CD14-positive monocyte (primary cell): ENCODE measurements at regions of chr12 and their contacts with region 1.

Region 1: DNA sequence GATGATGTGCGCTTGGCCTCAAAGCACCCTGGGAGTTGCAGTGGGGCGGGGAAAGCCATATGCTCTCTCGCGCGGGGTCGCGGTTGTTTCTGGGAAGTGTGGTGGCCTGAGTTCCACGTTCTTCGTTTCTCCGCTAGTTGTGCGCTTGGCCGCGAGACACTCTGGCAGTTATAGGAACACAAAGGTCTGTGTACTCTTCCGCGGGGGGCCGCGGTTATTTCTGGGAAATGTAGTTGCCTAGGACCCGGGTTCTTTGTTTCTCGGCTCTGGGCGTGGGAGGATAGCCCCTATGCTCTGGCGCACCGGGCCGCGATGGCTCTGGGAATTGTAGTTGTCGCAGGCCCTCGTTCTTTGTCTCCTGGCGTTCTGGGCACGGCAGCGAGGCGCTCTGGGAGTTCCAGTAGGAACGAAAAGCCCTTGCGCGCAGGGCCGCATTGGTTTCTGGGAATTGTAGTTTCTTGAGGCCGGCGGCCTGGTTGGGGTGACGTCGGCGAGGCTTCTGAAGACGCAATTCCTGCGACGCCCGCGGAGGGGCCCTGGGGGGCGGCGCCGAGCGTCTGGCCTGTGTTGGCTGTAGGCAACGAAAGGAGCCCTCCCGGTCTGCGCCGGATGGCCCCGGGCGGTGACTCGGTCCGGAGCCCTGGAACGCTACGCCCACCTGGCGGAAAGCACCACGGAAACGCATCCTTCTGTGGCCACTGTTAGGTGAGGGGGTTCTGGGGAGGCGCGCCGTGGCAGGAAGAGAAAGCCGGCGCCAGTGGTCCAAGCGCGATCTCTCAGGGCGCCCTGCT is at the start of gene ZNF140:
- DNase-seq: peak; percentile 94 to 96 (median 95)
- H3K4me3 ChIP-seq: peak within 1 kb of the TSS; percentile 78 to 86 (median 81)
- H3K4me3 Mint-ChIP-seq: peak within 1 kb of the TSS in 1 of 2 donors; percentile 26
- H3K27ac ChIP-seq: peak within 1 kb of the TSS; percentile 96 to 98
- H3K27ac Mint-ChIP-seq: peak within 1 kb of the TSS in 4 of 7 donors; percentile 40 to 82 (median 51)
- H3K4me1 ChIP-seq: peaks cover 11 to 12% of the 10 kb centered on the region in 2 donors
- H3K4me1 Mint-ChIP-seq: peaks cover 5% of the 10 kb centered on the region
- H3K27me3 ChIP-seq: no peaks in the 10 kb centered on the region
- H3K27me3 Mint-ChIP-seq: peaks cover 0 to 4% (median 0%) of the 10 kb centered on the region in 3 donors
- CTCF ChIP-seq: peak; percentile 30
- polyA plus RNA-seq, gene ZNF140: 6.2 to 11.8 (median 6.3) TPM

Region 2: DNA sequence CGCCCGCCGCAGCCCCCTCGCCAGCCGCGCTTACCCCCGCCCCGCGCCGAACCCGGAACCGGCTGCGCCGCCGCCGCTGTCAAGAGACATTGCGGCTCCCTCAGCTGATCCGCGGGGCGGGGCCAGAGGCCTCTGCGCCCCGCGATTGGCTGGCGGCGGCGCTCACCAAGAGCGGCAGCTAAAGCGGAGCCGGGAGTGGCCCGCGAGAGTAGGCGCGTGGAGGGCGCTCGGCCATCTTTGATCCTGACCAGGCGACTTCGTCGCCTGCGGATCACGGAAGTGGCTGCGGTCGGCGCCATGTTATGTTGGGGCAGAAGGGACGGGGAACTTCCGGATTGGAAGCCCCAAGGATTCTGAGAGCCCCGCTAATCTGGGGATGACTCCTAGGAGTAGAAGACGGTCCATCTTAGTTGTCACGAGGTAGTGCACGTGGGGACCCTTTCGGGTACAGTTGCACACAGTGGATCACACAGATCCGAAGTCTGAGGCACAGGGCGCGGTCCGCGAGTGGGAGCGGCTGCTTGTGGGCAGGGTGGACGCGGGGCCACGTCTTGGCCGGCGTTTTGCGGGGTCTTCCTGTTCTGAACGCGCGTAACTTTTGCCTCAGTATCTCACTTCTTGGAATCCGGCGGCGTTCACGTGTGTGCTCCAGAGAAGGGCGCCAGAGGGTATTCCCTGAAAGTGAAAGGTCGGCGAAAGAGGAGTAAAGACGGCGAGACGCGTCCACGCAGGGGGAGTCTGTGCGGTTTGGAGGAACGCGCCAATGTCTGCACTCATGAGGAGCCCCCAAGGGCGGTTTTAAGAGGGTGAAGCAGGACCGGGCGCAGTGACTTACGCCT is 192.8 kb before region 1 on chr12 and contains the start of gene CHFR:
- intact Hi-C with region 1: loop called (anchors 2 to 5 kb)
- DNase-seq: peak; percentile 98 to 99 (median 99)
- H3K4me3 ChIP-seq: peak within 1 kb of the TSS; percentile 85 to 92 (median 86)
- H3K4me3 Mint-ChIP-seq: peak within 1 kb of the TSS; percentile 97 to 98
- H3K27ac ChIP-seq: peak within 1 kb of the TSS; percentile 89 to 99
- H3K27ac Mint-ChIP-seq: peak within 1 kb of the TSS; percentile 98 to 100 (median 99)
- H3K4me1 ChIP-seq: peaks cover 10 to 15% of the 10 kb centered on the region in 2 donors
- H3K4me1 Mint-ChIP-seq: peaks cover 19% of the 10 kb centered on the region
- H3K27me3 ChIP-seq: no peaks in the 10 kb centered on the region
- H3K27me3 Mint-ChIP-seq: peaks cover 3 to 10% (median 8%) of the 10 kb centered on the region in 3 donors
- CTCF ChIP-seq: no peak
- polyA plus RNA-seq, gene CHFR: 28.0 to 76.3 (median 39.3) TPM

Region 3: GRCh38 chr12:132908145-132909044 is 172.2 kb before region 1 on chr12:
- intact Hi-C with region 1: loop called in 1 of 2 experiments (anchors 5 kb)
- DNase-seq: peak; percentile 56 to 66 (median 66)
- H3K4me3 ChIP-seq: peak overlapping the region; percentile 13 to 76 (median 45)
- H3K4me3 Mint-ChIP-seq: peak overlapping the region; percentile 80 to 94
- H3K27ac ChIP-seq: no peak overlapping the region
- H3K27ac Mint-ChIP-seq: peak overlapping the region in 5 of 7 donors; percentile 21 to 90 (median 70)
- H3K4me1 ChIP-seq: peaks cover 13 to 17% of the 10 kb centered on the region in 2 donors
- H3K4me1 Mint-ChIP-seq: peaks cover 16% of the 10 kb centered on the region
- H3K27me3 ChIP-seq: peaks cover 15 to 52% of the 10 kb centered on the region in 2 donors
- H3K27me3 Mint-ChIP-seq: peaks cover 43 to 59% (median 58%) of the 10 kb centered on the region in 3 donors
- CTCF ChIP-seq: no peak

Region 4: DNA sequence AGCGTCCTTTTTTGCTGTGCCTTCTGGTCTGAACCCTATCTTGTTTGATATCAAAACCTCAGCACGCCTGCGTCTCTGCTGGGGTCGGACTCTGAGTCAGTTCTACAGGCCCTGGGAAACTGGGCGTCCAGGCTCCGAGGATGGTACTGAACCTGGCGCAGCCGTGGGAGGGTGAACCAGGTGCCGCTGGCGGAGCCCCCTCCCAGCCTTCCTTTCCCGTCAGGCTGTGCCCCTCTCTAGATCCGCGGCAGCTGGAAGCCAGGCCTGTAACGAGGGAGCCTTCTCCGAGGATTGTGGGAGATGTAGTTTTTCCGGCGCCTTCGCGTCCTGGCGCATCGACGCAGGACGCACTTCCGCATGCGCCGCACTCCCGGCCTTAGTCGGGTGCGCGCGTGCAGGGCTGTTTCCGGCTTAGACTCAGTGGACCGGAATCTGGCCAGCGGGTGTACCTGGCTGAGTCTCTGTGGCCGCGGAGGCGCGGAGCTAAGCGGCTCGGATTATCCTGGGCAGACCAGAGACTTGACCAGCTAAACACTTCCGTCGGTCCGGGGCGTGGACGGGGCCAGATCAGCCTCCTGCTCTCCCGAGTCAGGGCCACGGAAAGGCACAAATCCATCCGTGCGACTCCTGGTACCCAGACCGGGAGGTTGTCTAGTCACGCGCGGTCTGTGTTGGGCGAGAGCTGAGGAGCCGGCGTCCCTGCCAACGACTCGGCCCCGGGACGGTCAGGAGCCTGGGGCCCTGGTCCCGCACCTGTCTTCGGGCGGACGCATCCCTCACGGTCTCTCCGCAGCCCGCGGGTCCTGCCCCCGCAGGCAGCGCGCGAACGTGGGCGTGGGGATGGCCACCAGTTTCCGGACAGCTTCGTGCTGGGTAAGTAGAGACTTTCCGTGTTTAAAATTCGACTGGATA is 94.3 kb before region 1 on chr12 and contains the start of gene ZNF26:
- intact Hi-C with region 1: loop called (anchors 1 to 5 kb)
- DNase-seq: peak; percentile 86 to 87 (median 86)
- H3K4me3 ChIP-seq: peak within 1 kb of the TSS; percentile 54 to 87 (median 74)
- H3K4me3 Mint-ChIP-seq: peak within 1 kb of the TSS; percentile 89 to 95
- H3K27ac ChIP-seq: peak within 1 kb of the TSS; percentile 54 to 89
- H3K27ac Mint-ChIP-seq: peak within 1 kb of the TSS; percentile 85 to 95 (median 92)
- H3K4me1 ChIP-seq: peaks cover 17 to 24% of the 10 kb centered on the region in 2 donors
- H3K4me1 Mint-ChIP-seq: peaks cover 14% of the 10 kb centered on the region
- H3K27me3 ChIP-seq: no peaks in the 10 kb centered on the region
- H3K27me3 Mint-ChIP-seq: peaks cover 0 to 2% (median 0%) of the 10 kb centered on the region in 3 donors
- CTCF ChIP-seq: no peak
- polyA plus RNA-seq, gene ZNF26: 3.3 to 17.6 (median 3.8) TPM

Region 5: GRCh38 chr12:133130038-133130807 is 49.7 kb after region 1 on chr12 and contains the starts of genes ZNF10 and ZNF891:
- intact Hi-C with region 1: loop called (anchors 1 to 2 kb)
- DNase-seq: peak; percentile 81 to 93 (median 87)
- H3K4me3 ChIP-seq: peak within 1 kb of the TSS; percentile 55 to 74 (median 72)
- H3K4me3 Mint-ChIP-seq: peak within 1 kb of the TSS; percentile 86 to 92
- H3K27ac ChIP-seq: peak within 1 kb of the TSS; percentile 83 to 88
- H3K27ac Mint-ChIP-seq: peak within 1 kb of the TSS; percentile 88 to 97 (median 95)
- H3K4me1 ChIP-seq: peaks cover 14% of the 10 kb centered on the region in 2 donors
- H3K4me1 Mint-ChIP-seq: peaks cover 15% of the 10 kb centered on the region
- H3K27me3 ChIP-seq: no peaks in the 10 kb centered on the region
- H3K27me3 Mint-ChIP-seq: peaks cover 0 to 3% (median 1%) of the 10 kb centered on the region in 3 donors
- CTCF ChIP-seq: no peak
- polyA plus RNA-seq, gene ZNF10: 0.68 to 1.00 (median 0.79) TPM
- polyA plus RNA-seq, gene ZNF891: 0.08 to 0.45 (median 0.18) TPM

Region 6: DNA sequence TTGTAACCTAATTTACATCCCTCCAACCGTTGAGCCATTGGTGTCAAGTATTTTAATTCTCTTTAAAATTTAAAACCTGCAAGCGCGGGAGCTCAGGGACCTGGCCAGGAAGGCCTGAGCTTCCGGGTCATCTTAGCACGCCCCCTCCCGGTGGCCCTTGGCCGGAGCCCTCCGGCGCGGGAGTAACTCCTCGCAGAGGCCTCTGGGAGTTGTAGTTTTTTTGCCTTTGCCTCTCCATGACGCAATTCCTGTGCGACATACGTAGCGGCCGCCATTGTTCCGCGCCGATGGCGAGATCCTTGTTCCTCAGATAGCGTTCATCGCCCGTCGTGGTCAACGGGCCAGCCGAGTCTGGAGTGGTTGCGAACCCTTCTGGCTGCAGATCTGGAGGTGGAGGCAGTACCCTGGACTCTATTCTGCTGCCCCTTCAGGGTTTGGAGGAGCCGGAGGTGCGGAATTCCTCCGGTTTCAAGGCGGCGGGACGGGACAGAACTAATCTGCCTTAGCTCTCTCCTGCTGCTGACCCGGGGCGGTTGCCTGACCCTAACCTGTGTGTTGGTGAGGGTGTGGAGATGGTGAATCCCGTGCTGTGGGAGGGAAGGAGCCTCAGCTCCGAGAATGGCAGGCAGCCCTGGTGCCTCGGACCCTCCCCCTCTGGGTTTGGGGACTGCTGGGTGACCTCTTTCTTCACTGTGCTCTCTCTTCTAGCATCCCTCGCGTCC is 100.8 kb after region 1 on chr12 and contains the start of gene ZNF268:
- intact Hi-C with region 1: loop called (anchors 1 to 2 kb)
- DNase-seq: peak; percentile 88 to 90 (median 89)
- H3K4me3 ChIP-seq: peak within 1 kb of the TSS; percentile 65 to 94 (median 87)
- H3K4me3 Mint-ChIP-seq: peak within 1 kb of the TSS; percentile 92 to 96
- H3K27ac ChIP-seq: peak within 1 kb of the TSS; percentile 62 to 91
- H3K27ac Mint-ChIP-seq: peak within 1 kb of the TSS; percentile 87 to 93 (median 93)
- H3K4me1 ChIP-seq: peaks cover 7% of the 10 kb centered on the region in 2 donors
- H3K4me1 Mint-ChIP-seq: peaks cover 10% of the 10 kb centered on the region
- H3K27me3 ChIP-seq: no peaks in the 10 kb centered on the region
- H3K27me3 Mint-ChIP-seq: peaks cover 0 to 2% (median 0%) of the 10 kb centered on the region in 3 donors
- CTCF ChIP-seq: peak; percentile 80
- polyA plus RNA-seq, gene ZNF268: 3.3 to 6.0 (median 5.8) TPM